Activated naive CD4-positive, alpha-beta T cell treated with anti-CD3 and anti-CD28 coated beads for 36 hours (primary cell): ENCODE measurements at regions of chr11 and their contacts with region 1.

Region 1: GRCh38 chr11:85947431-85948272 is 92.5 kb downstream of the CCDC83 start:
- DNase-seq: peak; percentile 62
- H3K4me3 Mint-ChIP-seq: peak overlapping the region; percentile 1
- H3K27ac Mint-ChIP-seq: peak overlapping the region; percentile 87
- H3K4me1 Mint-ChIP-seq: peaks cover 46% of the 10 kb centered on the region
- H3K27me3 Mint-ChIP-seq: no peaks in the 10 kb centered on the region

Region 2: GRCh38 chr11:85699957-85700741 is 247.5 kb before region 1 on chr11:
- CTCF ChIA-PET with region 1: no interaction called
- intact Hi-C with region 1: loop called (anchors 1 kb)
- DNase-seq: no peak
- H3K4me3 Mint-ChIP-seq: no peak overlapping the region
- H3K27ac Mint-ChIP-seq: peak overlapping the region; percentile 36
- H3K4me1 Mint-ChIP-seq: peaks cover 35% of the 10 kb centered on the region
- H3K27me3 Mint-ChIP-seq: no peaks in the 10 kb centered on the region

Region 3: GRCh38 chr11:86021377-86021776 is 73.7 kb after region 1 on chr11:
- CTCF ChIA-PET with region 1: no interaction called
- intact Hi-C with region 1: loop called (anchors 2 kb)
- DNase-seq: peak; percentile 24
- H3K4me3 Mint-ChIP-seq: no peak overlapping the region
- H3K27ac Mint-ChIP-seq: no peak overlapping the region
- H3K4me1 Mint-ChIP-seq: peaks cover 37% of the 10 kb centered on the region
- H3K27me3 Mint-ChIP-seq: no peaks in the 10 kb centered on the region

Region 4: GRCh38 chr11:86138958-86139357 is 191.3 kb after region 1 on chr11:
- CTCF ChIA-PET with region 1: no interaction called
- intact Hi-C with region 1: loop called (anchors 2 kb)
- DNase-seq: peak; percentile 48
- H3K4me3 Mint-ChIP-seq: no peak overlapping the region
- H3K27ac Mint-ChIP-seq: peak overlapping the region; percentile 25
- H3K4me1 Mint-ChIP-seq: peaks cover 13% of the 10 kb centered on the region
- H3K27me3 Mint-ChIP-seq: no peaks in the 10 kb centered on the region

Region 5: DNA sequence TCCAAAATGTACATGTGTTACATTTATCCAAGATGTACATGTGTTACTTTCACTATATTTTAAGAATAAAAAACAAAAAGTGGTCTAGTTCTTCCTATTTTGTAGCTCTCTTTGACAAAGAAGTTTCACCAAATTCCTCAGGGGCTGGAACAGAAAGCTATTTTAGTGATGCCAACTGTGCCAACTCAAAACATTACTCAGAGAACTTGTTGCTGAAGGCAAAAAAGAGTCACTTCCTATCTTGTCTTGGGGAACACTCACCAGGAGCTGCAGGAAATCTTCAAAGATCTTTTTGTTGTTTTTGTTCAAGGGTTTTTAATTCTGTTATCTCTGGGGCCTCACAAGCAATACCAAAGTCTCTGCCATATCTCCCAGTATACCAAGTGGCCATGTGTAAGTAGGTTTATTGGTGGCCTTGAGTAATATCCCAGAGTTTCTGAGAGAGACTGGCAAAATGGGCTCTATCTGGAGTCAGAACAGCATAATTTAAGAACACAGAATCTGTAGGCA is 283.3 kb after region 1 on chr11:
- CTCF ChIA-PET with region 1: no interaction called
- intact Hi-C with region 1: loop called (anchors 1 kb)
- DNase-seq: no peak
- H3K4me3 Mint-ChIP-seq: no peak overlapping the region
- H3K27ac Mint-ChIP-seq: peak overlapping the region; percentile 15
- H3K4me1 Mint-ChIP-seq: peaks cover 62% of the 10 kb centered on the region
- H3K27me3 Mint-ChIP-seq: no peaks in the 10 kb centered on the region

Region 6: GRCh38 chr11:86688398-86689179 is 740.9 kb after region 1 on chr11:
- CTCF ChIA-PET with region 1: no interaction called
- intact Hi-C with region 1: loop called (anchors 5 kb)
- DNase-seq: peak; percentile 70
- H3K4me3 Mint-ChIP-seq: no peak overlapping the region
- H3K27ac Mint-ChIP-seq: peak overlapping the region; percentile 90
- H3K4me1 Mint-ChIP-seq: peaks cover 27% of the 10 kb centered on the region
- H3K27me3 Mint-ChIP-seq: peaks cover 2% of the 10 kb centered on the region